Spleen (tissue), 13 donors: ENCODE measurements at regions of chr12 and their contacts with region 1.

Region 1: DNA sequence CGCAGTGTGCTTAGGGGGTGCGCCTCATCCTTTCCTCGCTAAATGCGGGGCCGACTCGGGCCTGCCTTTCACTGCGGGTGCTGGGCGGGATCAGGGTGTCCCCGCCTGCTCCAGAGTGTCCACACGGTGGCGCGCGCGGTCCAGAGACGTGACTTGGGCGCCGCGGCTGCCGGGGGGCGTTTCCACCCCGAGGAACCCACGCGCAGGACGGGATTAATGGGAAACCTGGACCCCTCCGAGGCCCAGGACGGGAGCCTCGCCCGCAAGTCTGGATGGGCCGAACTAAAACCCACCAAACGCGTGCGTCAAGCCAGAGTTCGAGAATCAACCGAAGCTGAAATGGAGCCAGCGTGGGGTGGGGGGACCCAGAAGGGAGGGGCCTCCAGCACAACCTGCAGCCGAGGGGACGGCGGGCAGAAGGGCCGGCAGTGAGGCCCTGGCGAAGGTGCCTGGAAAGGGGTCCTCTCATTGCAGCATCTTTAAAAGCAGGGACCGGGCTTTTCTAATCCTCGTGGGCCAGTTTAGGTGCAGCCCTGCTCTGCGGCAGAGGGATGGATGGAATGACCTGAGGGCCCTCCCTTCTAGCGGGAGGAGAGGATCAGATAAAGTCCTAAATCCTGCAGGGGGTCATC is 93.3 kb downstream of the NINJ2 start:
- DNase-seq: peak; percentile 96
- H3K4me3 ChIP-seq: peak overlapping the region; percentile 37 to 75 (median 52)
- H3K27ac ChIP-seq: peak overlapping the region; percentile 11 to 84 (median 76)
- H3K4me1 ChIP-seq: peaks cover 0 to 44% (median 19%) of the 10 kb centered on the region in 6 donors
- H3K27me3 ChIP-seq: no peaks in the 10 kb centered on the region
- CTCF ChIP-seq: peak; percentile 82 to 98 (median 95)
- POLR2A ChIP-seq: no peak

Region 2: DNA sequence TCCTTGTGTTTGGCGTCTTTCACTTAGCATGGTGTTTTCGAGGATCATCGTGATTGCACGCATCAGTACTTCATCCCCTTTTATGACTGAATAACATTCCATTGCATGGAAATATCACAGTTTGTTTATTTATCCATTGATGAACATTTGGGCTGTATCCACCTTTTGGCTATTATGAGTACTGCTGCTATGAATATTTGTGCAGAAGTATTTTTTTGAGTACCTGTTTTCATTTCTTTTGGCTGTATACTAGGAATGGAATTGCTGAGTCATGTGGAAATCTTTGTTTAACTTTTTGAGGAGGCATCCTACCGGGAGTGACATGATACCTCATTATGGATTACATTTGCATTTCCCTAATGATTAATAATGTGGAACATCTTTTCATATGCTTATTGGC is 248.8 kb after region 1 on chr12:
- intact Hi-C with region 1: loop called (anchors 5 kb)
- DNase-seq: no peak
- H3K4me3 ChIP-seq: no peak overlapping the region
- H3K27ac ChIP-seq: no peak overlapping the region
- H3K4me1 ChIP-seq: peaks cover 7 to 81% (median 40%) of the 10 kb centered on the region in 6 donors
- H3K27me3 ChIP-seq: no peaks in the 10 kb centered on the region
- CTCF ChIP-seq: no peak
- POLR2A ChIP-seq: no peak

Region 3: GRCh38 chr12:949453-950191 is 379.7 kb after region 1 on chr12 and contains the start of gene RAD52:
- intact Hi-C with region 1: loop called (anchors 5 kb)
- DNase-seq: peak; percentile 100
- H3K4me3 ChIP-seq: peak within 1 kb of the TSS; percentile 72 to 87 (median 81)
- H3K27ac ChIP-seq: peak within 1 kb of the TSS; percentile 80 to 94 (median 92)
- H3K4me1 ChIP-seq: peaks cover 7 to 45% (median 19%) of the 10 kb centered on the region in 6 donors
- H3K27me3 ChIP-seq: no peaks in the 10 kb centered on the region
- CTCF ChIP-seq: peak; percentile 98 to 100 (median 99)
- POLR2A ChIP-seq: peak in 1 of 3 donors; percentile 76
- total RNA-seq, gene RAD52: 9.1 to 19.5 (median 16.7) TPM